CD8-positive, alpha-beta T cell (primary cell): ENCODE measurements at regions of chr12 and their contacts with region 1.

Region 1: GRCh38 chr12:105382771-105383622 is 52.5 kb downstream of the C12orf75 start:
- DNase-seq: peak in 3 of 9 experiments; percentile 33 to 76 (median 67)
- ATAC-seq: peak; percentile 75
- H3K4me3 ChIP-seq: no peak overlapping the region
- H3K4me3 Mint-ChIP-seq: no peak overlapping the region
- H3K27ac ChIP-seq: no peak overlapping the region
- H3K27ac Mint-ChIP-seq: no peak overlapping the region
- H3K4me1 ChIP-seq: no peaks in the 10 kb centered on the region
- H3K4me1 Mint-ChIP-seq: no peaks in the 10 kb centered on the region
- H3K27me3 ChIP-seq: no peaks in the 10 kb centered on the region
- H3K27me3 Mint-ChIP-seq: no peaks in the 10 kb centered on the region
- CTCF ChIP-seq: peak; percentile 83

Region 2: DNA sequence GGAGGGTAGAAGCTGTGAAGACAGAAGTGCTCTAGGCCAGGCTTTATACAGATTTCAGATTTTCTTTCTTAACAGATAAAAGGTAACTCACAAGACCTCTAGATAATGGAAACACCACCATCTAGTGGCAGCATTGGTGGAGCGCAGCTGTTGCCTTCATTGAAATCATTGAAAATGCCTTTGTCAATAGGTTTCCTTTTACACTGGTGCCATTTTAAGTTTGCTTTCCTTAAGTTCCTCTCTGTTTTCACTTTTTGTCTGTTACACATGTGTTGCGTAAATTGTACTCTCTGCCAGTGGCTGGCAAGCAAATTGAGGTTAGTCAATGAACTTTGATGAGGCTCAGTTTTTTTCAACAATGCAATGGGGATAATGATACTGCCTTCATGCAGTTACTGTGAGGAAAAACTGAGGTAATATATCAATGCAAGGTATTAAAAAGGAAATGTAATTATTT is 329.9 kb before region 1 on chr12:
- CTCF ChIA-PET with region 1: no interaction called
- POLR2A ChIA-PET with region 1: no interaction called
- intact Hi-C with region 1: loop called in 1 of 2 experiments (anchors 2 kb)
- DNase-seq: peak; percentile 54 to 83 (median 72)
- ATAC-seq: peak; percentile 89
- H3K4me3 ChIP-seq: no peak overlapping the region
- H3K4me3 Mint-ChIP-seq: no peak overlapping the region
- H3K27ac ChIP-seq: no peak overlapping the region
- H3K27ac Mint-ChIP-seq: no peak overlapping the region
- H3K4me1 ChIP-seq: no peaks in the 10 kb centered on the region
- H3K4me1 Mint-ChIP-seq: no peaks in the 10 kb centered on the region
- H3K27me3 ChIP-seq: no peaks in the 10 kb centered on the region
- H3K27me3 Mint-ChIP-seq: peaks cover 2% of the 10 kb centered on the region
- CTCF ChIP-seq: peak; percentile 96

Region 3: GRCh38 chr12:105175397-105175990 is 207.5 kb before region 1 on chr12:
- CTCF ChIA-PET with region 1: interaction called, 3 read pairs
- POLR2A ChIA-PET with region 1: no interaction called
- intact Hi-C with region 1: loop called in 1 of 2 experiments (anchors 5 kb)
- DNase-seq: no peak
- ATAC-seq: no peak
- H3K4me3 ChIP-seq: no peak overlapping the region
- H3K4me3 Mint-ChIP-seq: no peak overlapping the region
- H3K27ac ChIP-seq: no peak overlapping the region
- H3K27ac Mint-ChIP-seq: peak overlapping the region; percentile 69
- H3K4me1 ChIP-seq: no peaks in the 10 kb centered on the region
- H3K4me1 Mint-ChIP-seq: no peaks in the 10 kb centered on the region
- H3K27me3 ChIP-seq: no peaks in the 10 kb centered on the region
- H3K27me3 Mint-ChIP-seq: no peaks in the 10 kb centered on the region
- CTCF ChIP-seq: no peak

Region 4: DNA sequence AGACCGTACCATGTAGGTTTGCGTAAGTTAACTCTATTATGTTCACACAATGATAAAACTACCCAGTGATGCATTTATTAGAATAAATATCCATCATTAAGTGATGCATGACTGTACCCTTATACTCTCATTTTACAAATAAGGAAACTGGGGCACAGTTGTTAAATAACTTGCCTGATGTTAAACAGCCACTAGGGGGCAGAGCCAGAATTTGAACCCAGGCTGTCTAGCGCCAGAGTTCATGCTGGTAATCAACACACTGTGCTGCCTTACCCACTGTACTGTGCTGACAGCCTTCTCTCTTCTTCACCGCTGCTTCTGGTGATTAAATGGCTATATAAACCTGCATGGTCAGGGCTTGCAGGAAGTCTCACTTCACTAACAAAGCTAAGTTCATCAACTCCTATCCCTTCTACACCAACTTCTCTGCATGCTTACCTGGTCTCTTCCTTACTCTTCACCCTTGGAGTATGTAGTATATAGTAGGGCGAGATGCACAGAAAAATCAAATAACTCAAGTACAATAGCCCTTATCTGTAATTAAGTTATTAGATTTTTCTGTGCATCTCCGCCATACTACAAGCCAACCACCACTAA is 103.4 kb before region 1 on chr12:
- CTCF ChIA-PET with region 1: interaction called, 12 read pairs
- POLR2A ChIA-PET with region 1: no interaction called
- intact Hi-C with region 1: loop called (anchors 1 kb)
- DNase-seq: peak in 8 of 9 experiments; percentile 1 to 65 (median 34)
- ATAC-seq: peak; percentile 48
- H3K4me3 ChIP-seq: no peak overlapping the region
- H3K4me3 Mint-ChIP-seq: no peak overlapping the region
- H3K27ac ChIP-seq: no peak overlapping the region
- H3K27ac Mint-ChIP-seq: no peak overlapping the region
- H3K4me1 ChIP-seq: no peaks in the 10 kb centered on the region
- H3K4me1 Mint-ChIP-seq: no peaks in the 10 kb centered on the region
- H3K27me3 ChIP-seq: no peaks in the 10 kb centered on the region
- H3K27me3 Mint-ChIP-seq: peaks cover 10% of the 10 kb centered on the region
- CTCF ChIP-seq: peak; percentile 68

Region 5: DNA sequence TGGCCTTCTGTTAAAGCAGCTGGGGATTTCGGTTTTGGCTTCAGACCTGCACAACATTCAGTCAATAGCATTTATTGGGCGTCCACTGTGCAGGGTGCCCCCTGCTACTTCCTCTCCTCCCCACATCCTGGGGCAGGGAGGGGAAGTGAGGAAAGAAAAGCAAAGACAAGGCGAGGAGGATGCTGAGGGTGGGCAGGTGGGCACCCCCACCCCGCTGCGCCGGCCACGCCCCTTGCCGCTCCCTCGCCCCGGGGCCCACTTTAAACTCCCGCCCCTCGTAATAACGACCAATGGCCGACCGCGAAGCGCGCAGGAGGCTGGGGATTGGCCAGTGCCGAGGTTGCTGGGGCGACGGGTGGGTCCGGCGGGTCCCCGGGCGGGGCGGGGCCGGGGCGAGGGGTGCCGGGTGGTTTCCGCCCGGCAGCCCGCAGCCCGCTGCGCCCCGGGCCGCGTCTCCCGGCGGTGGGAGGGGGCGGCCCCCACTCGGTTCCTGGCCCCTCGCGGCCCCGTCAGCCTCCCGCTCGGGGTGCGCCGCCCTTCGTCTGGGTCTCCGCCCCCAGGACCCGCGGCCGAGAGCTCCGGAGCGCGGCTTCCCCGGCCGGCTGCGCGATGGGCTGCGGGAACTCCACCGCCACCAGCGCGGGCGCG is 52.6 kb before region 1 on chr12 and contains the start of gene C12orf75:
- CTCF ChIA-PET with region 1: interaction called, 5 read pairs
- POLR2A ChIA-PET with region 1: no interaction called
- intact Hi-C with region 1: loop called in 1 of 2 experiments (anchors 2 kb)
- DNase-seq: peak; percentile 52 to 93 (median 85)
- ATAC-seq: peak; percentile 80
- H3K4me3 ChIP-seq: peak within 1 kb of the TSS; percentile 62 to 70
- H3K4me3 Mint-ChIP-seq: peak within 1 kb of the TSS; percentile 90
- H3K27ac ChIP-seq: peak within 1 kb of the TSS; percentile 48 to 74
- H3K27ac Mint-ChIP-seq: peak within 1 kb of the TSS; percentile 87
- H3K4me1 ChIP-seq: peaks cover 26% of the 10 kb centered on the region
- H3K4me1 Mint-ChIP-seq: peaks cover 60% of the 10 kb centered on the region
- H3K27me3 ChIP-seq: no peaks in the 10 kb centered on the region
- H3K27me3 Mint-ChIP-seq: no peaks in the 10 kb centered on the region
- CTCF ChIP-seq: no peak
- total RNA-seq, gene C12orf75: 27.5 to 27.9 TPM